ENCODE measurements at regions of chr11 and their contacts with region 1.

Region 1: GRCh38 chr11:122628810-122629555 is 26.5 kb upstream of the UBASH3B start:
- DNase-seq: peak; percentile 78

Region 2: DNA sequence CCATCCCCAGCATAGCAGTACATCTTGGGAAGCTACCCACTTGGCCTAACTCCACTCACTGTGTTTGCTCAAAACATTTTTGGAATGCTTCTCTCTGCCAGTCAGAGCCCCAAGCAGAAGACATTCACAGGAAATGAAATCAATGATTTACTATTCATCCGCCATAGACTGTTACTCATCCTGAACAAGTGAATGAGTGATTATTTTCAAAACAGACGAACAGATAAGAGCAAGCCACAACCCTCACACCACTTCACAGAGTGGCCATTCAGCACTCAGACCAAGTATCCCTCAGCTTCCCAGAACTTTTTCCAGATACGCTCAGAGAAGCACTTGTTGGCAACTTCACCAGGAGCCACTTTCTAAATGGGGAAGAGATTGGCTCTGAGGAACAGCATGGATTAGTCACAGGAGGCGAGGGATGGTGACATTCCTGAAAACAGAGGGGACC is 13.5 kb after region 1 on chr11:
- CTCF ChIA-PET with region 1: no interaction called
- POLR2A ChIA-PET with region 1: no interaction called
- DNase-seq: no peak

Region 3: GRCh38 chr11:122781378-122782195 is 152.6 kb after region 1 on chr11:
- CTCF ChIA-PET with region 1: interaction called, 23 read pairs
- POLR2A ChIA-PET with region 1: no interaction called
- DNase-seq: peak; percentile 88

Measured in HEK293T (cell line).